ENCODE measurements at regions of chr17 and their contacts with region 1.

Region 1: DNA sequence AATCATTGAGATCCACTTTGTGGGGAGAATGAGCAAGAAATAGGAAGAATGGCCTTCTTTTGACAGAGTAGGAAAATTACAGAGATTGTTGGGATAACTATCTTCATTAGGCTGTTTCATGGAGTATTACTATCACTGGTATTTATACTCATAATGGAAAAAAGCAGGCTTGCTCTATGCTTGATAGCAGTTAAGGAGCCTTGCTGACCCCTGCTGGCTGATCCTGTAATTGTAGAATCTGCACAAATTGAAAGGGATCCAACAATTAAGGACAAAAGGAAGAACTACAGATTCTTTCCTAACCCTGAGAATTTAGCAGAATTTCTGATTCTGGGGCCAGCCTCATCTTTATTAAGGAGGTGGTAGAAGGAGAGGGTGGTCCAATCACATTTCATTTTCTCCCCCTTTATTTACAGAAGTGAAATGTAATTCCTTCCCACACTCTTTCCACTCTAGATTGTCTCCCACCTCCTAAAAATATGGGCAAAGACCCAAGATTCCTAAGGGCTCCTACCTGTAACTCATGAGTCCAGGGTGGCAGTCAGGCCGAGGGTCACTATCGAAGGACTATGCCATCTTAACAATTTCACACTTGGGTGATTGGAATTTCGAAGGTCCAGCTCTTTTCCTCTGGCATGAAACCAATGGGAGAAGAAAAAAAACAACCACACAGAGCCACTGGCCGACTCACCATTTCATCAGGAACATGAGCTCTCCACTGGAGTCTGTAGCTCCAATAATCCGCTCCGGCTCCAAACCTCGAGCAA is 26.3 kb downstream of the NFE2L1 start:
- DNase-seq: peak in 5 of 6 donors; percentile 65 to 80 (median 70)
- ATAC-seq: peak; percentile 81 to 98 (median 94)
- H3K4me3 ChIP-seq: no peak overlapping the region
- H3K27ac ChIP-seq: no peak overlapping the region
- H3K4me1 ChIP-seq: peaks cover 0 to 5% (median 0%) of the 10 kb centered on the region in 3 donors
- H3K27me3 ChIP-seq: no peaks in the 10 kb centered on the region
- CTCF ChIP-seq: peak; percentile 49 to 72 (median 60)

Region 2: DNA sequence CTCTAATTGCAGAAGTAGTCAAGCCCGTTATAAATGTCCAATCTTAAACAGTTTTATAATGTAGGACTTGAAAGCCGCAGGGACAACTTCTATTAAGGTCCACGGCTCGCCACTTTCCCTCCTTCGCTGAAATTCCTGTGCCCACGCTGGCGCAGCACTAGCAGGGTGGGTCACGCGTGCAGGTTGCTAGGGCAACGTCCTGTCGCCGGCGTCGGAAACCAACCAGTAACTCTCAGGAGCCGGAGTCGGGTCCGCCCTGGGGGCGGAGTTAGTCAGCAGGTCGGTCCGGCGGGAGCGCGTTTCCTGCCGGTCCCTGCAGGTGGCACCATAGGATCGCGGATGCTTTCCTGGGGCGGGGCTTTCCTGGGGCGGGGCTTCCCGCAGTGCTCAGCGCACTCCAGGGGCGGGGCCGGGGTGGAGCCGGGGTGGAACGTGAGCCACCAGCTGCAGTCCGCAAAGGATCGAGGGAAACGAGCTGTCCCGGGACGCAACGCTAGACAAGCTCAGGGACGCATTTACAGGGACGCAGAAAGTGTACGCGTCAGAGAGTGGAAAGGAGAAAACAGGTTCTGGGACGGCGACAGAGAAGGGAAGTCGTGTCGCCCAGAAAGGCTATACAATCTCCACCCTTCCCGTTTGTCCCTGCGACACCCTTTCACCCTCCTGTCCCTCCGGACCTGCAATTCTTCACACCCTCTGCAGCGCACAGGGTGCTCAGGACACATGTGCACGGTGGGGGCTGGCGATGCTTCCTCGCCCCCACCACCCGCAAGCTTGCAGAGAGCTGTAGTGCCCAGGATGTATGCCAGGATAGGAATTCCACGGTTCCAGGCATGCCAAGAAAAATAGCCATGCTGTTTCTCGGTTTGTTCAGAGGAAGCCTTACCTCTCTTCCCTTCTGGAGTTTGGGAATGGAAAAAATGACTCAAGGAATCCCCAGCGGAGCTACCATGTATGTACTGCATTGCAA is 49.3 kb before region 1 on chr17:
- intact Hi-C with region 1: loop called in 2 of 3 experiments (anchors 5 kb)
- DNase-seq: peak; percentile 94 to 99 (median 99)
- ATAC-seq: peak; percentile 81 to 91 (median 86)
- H3K4me3 ChIP-seq: peak overlapping the region in 3 of 4 donors; percentile 9 to 53 (median 37)
- H3K27ac ChIP-seq: peak overlapping the region; percentile 6 to 71 (median 42)
- H3K4me1 ChIP-seq: peaks cover 24 to 30% (median 28%) of the 10 kb centered on the region in 3 donors
- H3K27me3 ChIP-seq: no peaks in the 10 kb centered on the region
- CTCF ChIP-seq: peak; percentile 60 to 75 (median 68)

Region 3: GRCh38 chr17:48194097-48194550 is 119.6 kb after region 1 on chr17:
- intact Hi-C with region 1: no loop called
- DNase-seq: no peak
- ATAC-seq: no peak
- H3K4me3 ChIP-seq: no peak overlapping the region
- H3K27ac ChIP-seq: no peak overlapping the region
- H3K4me1 ChIP-seq: no peaks in the 10 kb centered on the region
- H3K27me3 ChIP-seq: peaks cover 0 to 2% (median 0%) of the 10 kb centered on the region in 4 donors
- CTCF ChIP-seq: no peak

Measured in pancreas (tissue), 10 donors.